Activated B cell treated with CpG ODN at 0.5 μM for 24 hours (primary cell): ENCODE measurements at regions of chr17 and their contacts with region 1.

Region 1: DNA sequence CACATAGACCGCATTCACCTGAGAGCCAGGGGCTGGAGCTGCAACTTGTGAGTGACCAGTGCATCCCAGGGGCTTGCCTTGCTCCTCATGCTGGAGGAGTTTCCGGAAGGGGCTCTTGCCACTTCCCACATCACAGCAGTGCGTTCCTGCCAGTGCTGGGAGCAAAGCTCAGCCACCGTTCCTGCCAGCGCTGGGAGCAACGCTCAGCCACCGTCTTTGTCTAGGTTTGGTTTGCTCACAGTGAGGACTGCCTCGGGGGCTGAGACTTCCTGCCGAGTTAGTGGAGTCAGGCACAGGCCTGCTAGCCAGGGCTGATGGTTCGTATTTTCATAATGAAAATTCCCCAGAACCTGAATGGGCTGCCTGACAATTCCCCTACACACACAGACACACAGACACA is 5.4 kb upstream of the CHRNE start:
- DNase-seq: no peak
- ATAC-seq: no peak
- H3K4me3 Mint-ChIP-seq: no peak overlapping the region
- H3K27ac Mint-ChIP-seq: no peak overlapping the region
- H3K4me1 Mint-ChIP-seq: peaks cover 4% of the 10 kb centered on the region
- H3K27me3 Mint-ChIP-seq: peaks cover 2% of the 10 kb centered on the region
- CTCF ChIP-seq: no peak

Region 2: GRCh38 chr17:4806777-4807604 is 101.3 kb before region 1 on chr17 and contains the start of gene PLD2:
- CTCF ChIA-PET with region 1: no interaction called
- POLR2A ChIA-PET with region 1: no interaction called
- intact Hi-C with region 1: no loop called
- DNase-seq: peak; percentile 90
- ATAC-seq: peak; percentile 99
- H3K4me3 Mint-ChIP-seq: peak within 1 kb of the TSS; percentile 83
- H3K27ac Mint-ChIP-seq: peak within 1 kb of the TSS; percentile 56
- H3K4me1 Mint-ChIP-seq: peaks cover 17% of the 10 kb centered on the region
- H3K27me3 Mint-ChIP-seq: no peaks in the 10 kb centered on the region
- CTCF ChIP-seq: no peak
- total RNA-seq, gene PLD2: 49.9 and 54.3 TPM in 2 replicates

Region 3: DNA sequence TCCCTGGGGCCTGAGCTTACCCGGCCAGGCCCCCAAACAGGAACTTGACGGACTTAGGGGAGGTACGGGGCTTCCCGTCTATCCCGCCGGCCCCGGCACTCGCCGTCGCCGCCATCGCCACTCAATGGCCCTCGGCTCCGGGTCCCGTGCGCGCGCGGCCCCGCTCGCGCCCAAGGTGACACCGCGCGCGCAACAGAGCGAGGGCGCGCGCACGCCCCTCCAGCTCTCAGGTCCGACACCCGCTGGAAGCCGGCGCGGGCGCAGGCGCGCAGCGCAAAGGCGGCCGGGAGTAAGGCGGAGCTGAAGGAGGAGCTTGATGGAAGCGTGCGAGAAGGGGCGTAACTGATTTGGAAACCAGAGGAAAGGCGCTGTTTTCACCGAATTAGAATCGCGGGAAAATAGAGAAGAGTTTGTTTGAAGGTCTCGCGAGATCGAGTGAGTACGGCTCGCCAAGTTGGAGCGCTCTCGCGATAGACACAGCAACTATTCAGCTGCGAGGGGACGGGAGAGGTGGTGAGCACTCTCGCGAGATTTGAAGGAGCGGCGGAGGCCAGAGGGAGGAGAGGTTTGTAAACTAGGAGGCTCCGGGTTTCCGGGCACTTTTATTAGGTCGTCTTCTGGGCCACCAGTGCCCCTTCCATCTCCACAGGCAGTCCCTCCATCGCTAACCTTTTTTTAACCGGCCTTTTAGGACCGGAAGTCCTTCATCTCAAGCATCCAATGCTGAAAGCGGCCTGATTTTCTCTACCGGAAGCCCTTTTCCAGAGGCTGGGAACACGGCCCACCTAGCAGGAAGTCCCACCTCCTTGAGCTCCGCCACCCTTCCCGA is 31.7 kb after region 1 on chr17 and contains the starts of genes RNF167 and SLC25A11:
- CTCF ChIA-PET with region 1: interaction called, 14 read pairs
- POLR2A ChIA-PET with region 1: interaction called, 10 read pairs
- intact Hi-C with region 1: no loop called
- DNase-seq: peak; percentile 93
- ATAC-seq: peak; percentile 84
- H3K4me3 Mint-ChIP-seq: peak within 1 kb of the TSS; percentile 97
- H3K27ac Mint-ChIP-seq: peak within 1 kb of the TSS; percentile 98
- H3K4me1 Mint-ChIP-seq: peaks cover 69% of the 10 kb centered on the region
- H3K27me3 Mint-ChIP-seq: no peaks in the 10 kb centered on the region
- CTCF ChIP-seq: no peak
- total RNA-seq, gene RNF167: 93.3 and 108 TPM in 2 replicates
- total RNA-seq, gene SLC25A11: 35.3 and 35.8 TPM in 2 replicates

Region 4: GRCh38 chr17:4956493-4957061 is 48.3 kb after region 1 on chr17:
- CTCF ChIA-PET with region 1: interaction called, 4 read pairs
- POLR2A ChIA-PET with region 1: no interaction called
- intact Hi-C with region 1: loop called (anchors 1 kb)
- DNase-seq: no peak
- ATAC-seq: no peak
- H3K4me3 Mint-ChIP-seq: no peak overlapping the region
- H3K27ac Mint-ChIP-seq: no peak overlapping the region
- H3K4me1 Mint-ChIP-seq: no peaks in the 10 kb centered on the region
- H3K27me3 Mint-ChIP-seq: no peaks in the 10 kb centered on the region
- CTCF ChIP-seq: no peak

Region 5: DNA sequence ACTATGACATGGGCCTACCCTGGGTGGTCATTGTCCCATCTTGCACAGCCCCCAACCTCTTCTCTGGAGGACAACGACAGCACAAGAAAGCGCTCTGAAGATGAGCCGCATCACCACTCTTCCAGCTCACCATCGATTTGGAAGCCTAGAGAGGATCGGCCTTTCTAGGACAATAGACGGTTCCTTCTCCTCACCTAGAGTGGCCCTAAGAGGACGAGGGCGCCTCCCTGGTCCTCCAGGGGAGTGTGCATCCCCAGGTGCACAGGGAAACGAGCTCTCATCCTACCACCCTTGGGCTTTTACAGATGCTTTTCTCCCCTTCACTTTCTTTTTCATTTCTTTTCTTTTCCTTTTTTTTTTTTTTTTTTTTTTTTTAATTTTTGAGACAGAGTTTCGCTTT is 147.2 kb after region 1 on chr17:
- CTCF ChIA-PET with region 1: interaction called, 38 read pairs
- POLR2A ChIA-PET with region 1: no interaction called
- intact Hi-C with region 1: no loop called
- DNase-seq: no peak
- ATAC-seq: no peak
- H3K4me3 Mint-ChIP-seq: no peak overlapping the region
- H3K27ac Mint-ChIP-seq: no peak overlapping the region
- H3K4me1 Mint-ChIP-seq: peaks cover 19% of the 10 kb centered on the region
- H3K27me3 Mint-ChIP-seq: no peaks in the 10 kb centered on the region
- CTCF ChIP-seq: no peak